HCT116 (cell line): ENCODE measurements at regions of chr10 and their contacts with region 1.

Region 1: GRCh38 chr10:80382989-80383388 is 25.4 kb upstream of the PRXL2A start:
- DNase-seq: peak; percentile 49
- ATAC-seq: peak; percentile 57
- H3K4me3 ChIP-seq: peak overlapping the region; percentile 13 to 23; a peak in 3 of 4 replicates
- H3K27ac ChIP-seq: no peak overlapping the region
- H3K4me1 ChIP-seq: peaks cover 0 to 13% of the 10 kb centered on the region in 2 experiments; a peak in 3 of 4 replicates
- H3K27me3 ChIP-seq: no peaks in the 10 kb centered on the region
- CTCF ChIP-seq: peak; percentile 66 to 88 (median 78)
- POLR2A ChIP-seq: no peak
- RAD21 ChIP-seq: peak; percentile 89

Region 2: GRCh38 chr10:80196270-80196949 is 186.6 kb before region 1 on chr10:
- CTCF ChIA-PET with region 1: no interaction called
- POLR2A ChIA-PET with region 1: no interaction called
- RAD21 ChIA-PET with region 1: no interaction called
- intact Hi-C with region 1: no loop called
- DNase-seq: peak; percentile 90
- ATAC-seq: peak; percentile 86
- H3K4me3 ChIP-seq: peak overlapping the region; percentile 11 to 43; a peak in 3 of 4 replicates
- H3K27ac ChIP-seq: peak overlapping the region; percentile 83
- H3K4me1 ChIP-seq: peaks cover 67 to 86% of the 10 kb centered on the region in 2 experiments
- H3K27me3 ChIP-seq: no peaks in the 10 kb centered on the region
- CTCF ChIP-seq: no peak
- POLR2A ChIP-seq: no peak
- RAD21 ChIP-seq: no peak

Region 3: GRCh38 chr10:80504158-80504811 is 121.3 kb after region 1 on chr10:
- CTCF ChIA-PET with region 1: interaction called, 18 read pairs
- POLR2A ChIA-PET with region 1: no interaction called
- RAD21 ChIA-PET with region 1: interaction called, 3 read pairs
- intact Hi-C with region 1: loop called (anchors 1 kb)
- DNase-seq: no peak
- ATAC-seq: no peak
- H3K4me3 ChIP-seq: no peak overlapping the region
- H3K27ac ChIP-seq: peak overlapping the region; percentile 90
- H3K4me1 ChIP-seq: peaks cover 97 to 98% of the 10 kb centered on the region in 2 experiments
- H3K27me3 ChIP-seq: no peaks in the 10 kb centered on the region
- CTCF ChIP-seq: no peak
- POLR2A ChIP-seq: no peak
- RAD21 ChIP-seq: no peak

Region 4: DNA sequence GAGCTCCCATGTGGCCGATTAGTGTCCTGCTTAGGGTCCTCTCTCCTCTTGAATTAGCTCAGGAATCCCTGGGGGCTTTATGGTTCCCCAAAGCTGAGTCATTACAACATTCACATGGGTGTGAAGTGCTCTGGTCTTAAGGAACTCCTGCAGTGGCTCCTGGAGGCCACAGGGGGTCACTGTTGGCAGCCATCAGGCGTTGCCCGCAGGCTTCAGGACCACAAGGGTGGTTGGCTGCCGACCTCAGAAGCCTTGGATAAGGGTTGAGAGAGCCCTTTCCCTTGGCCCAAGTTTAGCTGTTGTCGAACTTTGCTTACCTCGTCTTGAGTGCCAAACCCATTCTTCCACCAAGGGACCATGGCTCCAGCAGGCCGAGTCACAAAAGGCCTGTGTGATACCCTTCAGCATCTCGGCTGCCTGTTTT is 216.4 kb after region 1 on chr10:
- CTCF ChIA-PET with region 1: no interaction called
- POLR2A ChIA-PET with region 1: no interaction called
- RAD21 ChIA-PET with region 1: no interaction called
- intact Hi-C with region 1: loop called (anchors 10 kb)
- DNase-seq: peak; percentile 59
- ATAC-seq: peak; percentile 86
- H3K4me3 ChIP-seq: no peak overlapping the region
- H3K27ac ChIP-seq: no peak overlapping the region
- H3K4me1 ChIP-seq: 0 out of 4 replicates have a peak, but pooled peaks cover 0 to 3% of the 10 kb centered on the region in 2 experiments
- H3K27me3 ChIP-seq: no peaks in the 10 kb centered on the region
- CTCF ChIP-seq: peak; percentile 58 to 96 (median 94); a peak in 5 of 6 replicates
- POLR2A ChIP-seq: no peak
- RAD21 ChIP-seq: peak; percentile 59

Region 5: GRCh38 chr10:80699602-80700039 is 316.6 kb after region 1 on chr10:
- CTCF ChIA-PET with region 1: no interaction called
- POLR2A ChIA-PET with region 1: no interaction called
- RAD21 ChIA-PET with region 1: no interaction called
- intact Hi-C with region 1: loop called (anchors 5 kb)
- DNase-seq: peak; percentile 51
- ATAC-seq: peak; percentile 98
- H3K4me3 ChIP-seq: no peak overlapping the region
- H3K27ac ChIP-seq: no peak overlapping the region
- H3K4me1 ChIP-seq: no peaks in the 10 kb centered on the region
- H3K27me3 ChIP-seq: peaks cover 3% of the 10 kb centered on the region; the same call in 1 of the 2 replicates
- CTCF ChIP-seq: peak; percentile 83 to 91 (median 89)
- POLR2A ChIP-seq: no peak
- RAD21 ChIP-seq: peak; percentile 82

Region 6: GRCh38 chr10:81018708-81019365 is 635.8 kb after region 1 on chr10:
- CTCF ChIA-PET with region 1: interaction called, 3 read pairs
- POLR2A ChIA-PET with region 1: no interaction called
- RAD21 ChIA-PET with region 1: no interaction called
- intact Hi-C with region 1: loop called (anchors 2 kb)
- DNase-seq: peak; percentile 31
- ATAC-seq: peak; percentile 82; the same call in 1 of the 2 replicates
- H3K4me3 ChIP-seq: no peak overlapping the region
- H3K27ac ChIP-seq: no peak overlapping the region
- H3K4me1 ChIP-seq: no peaks in the 10 kb centered on the region
- H3K27me3 ChIP-seq: no peaks in the 10 kb centered on the region
- CTCF ChIP-seq: peak; percentile 37 to 71 (median 66); a peak in 4 of 6 replicates
- POLR2A ChIP-seq: no peak
- RAD21 ChIP-seq: peak; percentile 42